ENCODE measurements at regions of chr12 and their contacts with region 1.

Region 1: GRCh38 chr12:45728630-45729232 is 775 bp upstream of the ARID2 start:
- DNase-seq: peak; percentile 98
- H3K4me3 ChIP-seq: peak overlapping the region; percentile 98
- H3K27ac ChIP-seq: peak overlapping the region; percentile 97
- H3K4me1 ChIP-seq: peaks cover 25% of the 10 kb centered on the region
- CTCF ChIP-seq: peak; percentile 79

Region 2: GRCh38 chr12:45215419-45216229 is 513.1 kb before region 1 on chr12 and contains the start of gene ANO6:
- CTCF ChIA-PET with region 1: no interaction called
- POLR2A ChIA-PET with region 1: interaction called, 5 read pairs
- intact Hi-C with region 1: loop called (anchors 1 kb)
- DNase-seq: peak; percentile 89
- H3K4me3 ChIP-seq: peak within 1 kb of the TSS; percentile 90
- H3K27ac ChIP-seq: peak within 1 kb of the TSS; percentile 90
- H3K4me1 ChIP-seq: peaks cover 19% of the 10 kb centered on the region
- CTCF ChIP-seq: peak; percentile 71
- total RNA-seq, gene ANO6: 11.9 and 15.0 TPM in 2 replicates

Region 3: DNA sequence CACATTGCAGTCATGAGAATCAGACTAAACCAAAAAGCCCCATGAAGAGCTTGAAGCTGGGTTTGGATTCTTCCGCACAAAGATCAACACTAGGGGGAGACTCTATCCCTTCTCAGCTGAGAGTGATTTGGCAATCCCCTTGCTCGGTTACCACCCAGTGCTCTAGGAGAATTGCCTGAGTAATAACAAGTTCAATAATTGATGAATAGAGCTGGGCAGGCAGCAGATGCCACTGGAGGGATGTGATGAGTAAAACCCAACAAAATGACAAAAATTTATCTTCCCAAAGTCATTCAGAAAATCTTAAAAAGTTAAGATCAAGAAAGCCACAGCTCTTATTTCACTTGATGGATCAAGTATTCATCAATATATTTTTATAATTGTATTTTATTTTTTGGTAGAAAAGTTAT is 184.8 kb before region 1 on chr12:
- CTCF ChIA-PET with region 1: no interaction called
- POLR2A ChIA-PET with region 1: no interaction called
- intact Hi-C with region 1: loop called (anchors 10 kb)
- DNase-seq: peak; percentile 67
- H3K4me3 ChIP-seq: no peak overlapping the region
- H3K27ac ChIP-seq: no peak overlapping the region
- H3K4me1 ChIP-seq: no peaks in the 10 kb centered on the region
- CTCF ChIP-seq: peak; percentile 91

Region 4: GRCh38 chr12:46108721-46109120 is 380.0 kb after region 1 on chr12:
- CTCF ChIA-PET with region 1: no interaction called
- POLR2A ChIA-PET with region 1: no interaction called
- intact Hi-C with region 1: loop called (anchors 1 kb)
- DNase-seq: peak; percentile 91
- H3K4me3 ChIP-seq: peak overlapping the region; percentile 32
- H3K27ac ChIP-seq: peak overlapping the region; percentile 92
- H3K4me1 ChIP-seq: peaks cover 56% of the 10 kb centered on the region
- CTCF ChIP-seq: no peak

Region 5: GRCh38 chr12:46372544-46373110 is 643.9 kb after region 1 on chr12 and contains the start of gene SLC38A2:
- CTCF ChIA-PET with region 1: no interaction called
- POLR2A ChIA-PET with region 1: interaction called, 3 read pairs
- intact Hi-C with region 1: loop called (anchors 5 kb)
- DNase-seq: peak; percentile 93
- H3K4me3 ChIP-seq: peak within 1 kb of the TSS; percentile 95
- H3K27ac ChIP-seq: peak within 1 kb of the TSS; percentile 77
- H3K4me1 ChIP-seq: peaks cover 24% of the 10 kb centered on the region
- CTCF ChIP-seq: no peak
- total RNA-seq, gene SLC38A2: 66.2 and 70.5 TPM in 2 replicates